ENCODE measurements at regions of chr11 and their contacts with region 1.

Region 1: GRCh38 chr11:61947486-61948210 is 2.5 kb upstream of the BEST1 start:
- DNase-seq: peak; percentile 92 to 94
- ATAC-seq: peak; percentile 90
- H3K4me3 ChIP-seq: no peak overlapping the region
- H3K27ac ChIP-seq: no peak overlapping the region
- H3K4me1 ChIP-seq: no peaks in the 10 kb centered on the region
- H3K27me3 ChIP-seq: no peaks in the 10 kb centered on the region

Region 2: DNA sequence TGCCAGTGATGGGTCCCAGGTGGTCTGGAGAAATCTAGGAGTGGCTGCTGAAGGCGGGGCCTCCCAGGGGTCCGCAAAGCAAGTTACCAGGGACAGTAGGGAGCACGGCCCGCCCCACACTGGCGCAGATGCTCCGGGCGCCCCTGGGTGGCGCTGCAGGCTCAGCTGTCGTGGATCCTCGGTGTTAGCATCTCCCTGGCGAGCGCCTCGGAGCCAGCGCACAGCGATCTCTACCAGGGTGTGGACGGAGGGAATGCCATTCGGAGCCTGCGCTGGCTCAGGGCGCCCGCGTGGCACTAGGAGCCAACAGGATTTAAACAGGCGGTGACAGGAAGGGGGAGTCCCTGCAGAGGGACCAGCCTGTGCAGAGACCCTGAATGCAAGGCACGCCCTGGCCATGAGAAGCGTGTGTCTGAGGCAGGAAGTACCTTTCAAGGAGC is 76.5 kb before region 1 on chr11:
- intact Hi-C with region 1: loop called in 1 of 2 experiments (anchors 1 kb)
- DNase-seq: peak; percentile 90 to 95
- ATAC-seq: peak; percentile 92
- H3K4me3 ChIP-seq: no peak overlapping the region
- H3K27ac ChIP-seq: peak overlapping the region in 1 of 2 donors; percentile 49
- H3K4me1 ChIP-seq: no peaks in the 10 kb centered on the region
- H3K27me3 ChIP-seq: no peaks in the 10 kb centered on the region

Region 3: DNA sequence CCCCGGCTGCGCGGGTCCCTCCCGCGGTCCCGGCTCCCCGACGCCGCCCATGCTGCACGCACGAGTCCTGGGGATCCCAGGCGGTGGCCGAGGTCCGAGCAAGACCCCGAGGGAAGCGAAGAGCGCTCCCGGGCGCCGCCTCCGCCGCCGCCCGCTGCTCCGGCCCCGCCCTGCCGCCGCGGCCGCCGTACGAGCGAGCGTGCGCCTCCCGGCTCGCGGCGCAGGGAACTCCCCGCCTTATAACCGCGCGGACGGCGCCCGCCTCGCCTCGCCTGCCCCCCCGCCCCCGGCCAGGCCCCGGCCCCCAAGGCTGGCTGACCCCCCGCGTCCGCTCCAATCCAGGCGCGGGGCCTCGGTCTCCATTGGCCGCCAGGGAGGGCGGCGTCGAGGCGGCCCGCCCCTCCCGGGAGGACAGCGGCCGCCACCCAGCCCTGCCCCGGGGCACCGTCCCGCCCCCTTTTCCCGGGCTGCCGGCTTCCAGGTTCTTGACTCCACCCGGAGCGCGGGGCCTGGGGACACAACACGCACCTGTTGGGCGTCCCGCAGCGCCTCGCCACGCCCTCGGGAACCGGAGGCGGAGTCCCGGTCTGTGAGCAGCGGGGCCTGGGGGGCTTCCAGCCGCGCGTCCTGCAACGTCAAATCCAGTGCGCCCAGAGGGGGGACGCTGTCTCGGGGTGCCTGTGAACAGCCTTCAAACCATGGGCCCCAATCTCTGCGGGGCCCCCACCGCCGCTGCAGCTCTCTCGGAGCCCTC is 56.1 kb before region 1 on chr11 and contains the start of gene FADS3:
- intact Hi-C with region 1: no loop called
- DNase-seq: peak; percentile 89 to 95
- ATAC-seq: peak; percentile 91
- H3K4me3 ChIP-seq: peak within 1 kb of the TSS; percentile 43 to 44
- H3K27ac ChIP-seq: peak within 1 kb of the TSS; percentile 0 to 87
- H3K4me1 ChIP-seq: no peaks in the 10 kb centered on the region
- H3K27me3 ChIP-seq: no peaks in the 10 kb centered on the region
- total RNA-seq, gene FADS3: 120 to 180 TPM

Region 4: GRCh38 chr11:62081378-62082291 is 134.0 kb after region 1 on chr11:
- intact Hi-C with region 1: loop called (anchors 5 kb)
- DNase-seq: peak; percentile 86 to 95
- ATAC-seq: peak; percentile 88
- H3K4me3 ChIP-seq: no peak overlapping the region
- H3K27ac ChIP-seq: no peak overlapping the region
- H3K4me1 ChIP-seq: no peaks in the 10 kb centered on the region
- H3K27me3 ChIP-seq: no peaks in the 10 kb centered on the region

Region 5: DNA sequence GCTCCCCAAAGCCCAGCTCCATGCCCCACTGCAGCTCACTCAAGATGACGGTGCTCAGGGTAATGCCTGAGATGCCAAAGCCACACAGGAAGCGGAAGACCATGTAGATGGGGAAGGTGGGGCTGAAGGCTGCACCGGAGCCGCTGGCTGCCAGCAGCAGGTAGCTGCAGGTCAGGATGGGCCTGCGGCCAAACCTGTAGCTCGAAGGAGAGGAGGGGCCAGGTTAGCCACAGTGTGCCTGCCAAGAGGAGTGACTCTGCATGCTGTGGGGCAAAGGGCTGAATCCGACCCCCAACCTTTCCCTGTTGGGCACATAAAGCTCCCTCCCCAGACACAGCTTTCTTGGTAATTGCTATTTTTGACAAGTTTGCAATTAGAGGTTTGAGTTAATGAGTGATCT is 1052.0 kb after region 1 on chr11:
- intact Hi-C with region 1: no loop called
- DNase-seq: no peak
- ATAC-seq: no peak
- H3K4me3 ChIP-seq: no peak overlapping the region
- H3K27ac ChIP-seq: no peak overlapping the region
- H3K4me1 ChIP-seq: no peaks in the 10 kb centered on the region
- H3K27me3 ChIP-seq: no peaks in the 10 kb centered on the region

Measured in aorta (tissue), 5 donors.